OCI-LY7 (cell line): ENCODE measurements at regions of chr4 and their contacts with region 1.

Region 1: DNA sequence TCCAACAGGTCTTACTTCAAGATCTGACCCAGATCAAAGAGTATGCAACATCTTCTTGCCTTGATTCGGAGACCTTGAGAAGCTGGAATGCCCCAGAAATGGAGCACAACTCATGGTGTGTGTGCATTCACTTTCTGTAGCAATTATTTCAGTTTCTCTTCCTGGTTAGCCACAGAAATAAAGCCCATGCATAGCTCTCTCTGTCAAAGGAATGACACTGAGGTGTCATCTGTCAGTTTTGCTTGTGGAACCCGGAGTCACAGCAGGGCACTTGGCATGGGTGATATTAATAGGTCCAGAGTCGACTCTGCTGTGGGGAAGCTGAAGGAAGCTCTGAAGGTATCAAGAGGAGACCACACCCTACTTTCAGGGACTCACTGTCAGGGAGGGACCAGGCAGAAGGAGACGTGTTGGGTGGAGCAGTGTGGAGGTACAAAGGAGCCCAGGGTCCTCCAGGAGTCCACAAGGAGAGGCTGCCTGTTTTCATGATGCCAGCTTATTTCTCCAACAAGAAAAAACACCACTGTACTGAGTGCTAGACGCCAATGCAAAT is 10.7 kb downstream of the CLNK start:
- DNase-seq: no peak
- H3K4me3 ChIP-seq: no peak overlapping the region
- H3K27ac ChIP-seq: no peak overlapping the region
- H3K4me1 ChIP-seq: peaks cover 18% of the 10 kb centered on the region
- CTCF ChIP-seq: no peak

Region 2: GRCh38 chr4:10619220-10619619 is 54.7 kb before region 1 on chr4:
- CTCF ChIA-PET with region 1: no interaction called
- POLR2A ChIA-PET with region 1: no interaction called
- intact Hi-C with region 1: no loop called
- DNase-seq: no peak
- H3K4me3 ChIP-seq: no peak overlapping the region
- H3K27ac ChIP-seq: no peak overlapping the region
- H3K4me1 ChIP-seq: no peaks in the 10 kb centered on the region
- CTCF ChIP-seq: no peak

Region 3: GRCh38 chr4:10684631-10685030 is 10.7 kb after region 1 on chr4 and contains the start of gene CLNK:
- CTCF ChIA-PET with region 1: no interaction called
- POLR2A ChIA-PET with region 1: interaction called, 14 read pairs
- intact Hi-C with region 1: no loop called
- DNase-seq: peak; percentile 41
- H3K4me3 ChIP-seq: no peak within 1 kb of the TSS
- H3K27ac ChIP-seq: no peak within 1 kb of the TSS
- H3K4me1 ChIP-seq: peaks cover 24% of the 10 kb centered on the region
- CTCF ChIP-seq: no peak
- total RNA-seq, gene CLNK: 0.05 TPM in 1 of 2 replicates, not detected in the other

Region 4: GRCh38 chr4:10698172-10698571 is 24.3 kb after region 1 on chr4:
- CTCF ChIA-PET with region 1: no interaction called
- POLR2A ChIA-PET with region 1: no interaction called
- intact Hi-C with region 1: no loop called
- DNase-seq: no peak
- H3K4me3 ChIP-seq: no peak overlapping the region
- H3K27ac ChIP-seq: no peak overlapping the region
- H3K4me1 ChIP-seq: no peaks in the 10 kb centered on the region
- CTCF ChIP-seq: no peak